ENCODE measurements at regions of chr11 and their contacts with region 1.

Region 1: GRCh38 chr11:6757373-6757967 is 14.3 kb downstream of the OR2AG2 start:
- DNase-seq: peak; percentile 65
- H3K4me3 Mint-ChIP-seq: no peak overlapping the region
- H3K27ac Mint-ChIP-seq: no peak overlapping the region
- H3K4me1 Mint-ChIP-seq: no peaks in the 10 kb centered on the region
- H3K27me3 Mint-ChIP-seq: peaks cover 4% of the 10 kb centered on the region

Region 2: DNA sequence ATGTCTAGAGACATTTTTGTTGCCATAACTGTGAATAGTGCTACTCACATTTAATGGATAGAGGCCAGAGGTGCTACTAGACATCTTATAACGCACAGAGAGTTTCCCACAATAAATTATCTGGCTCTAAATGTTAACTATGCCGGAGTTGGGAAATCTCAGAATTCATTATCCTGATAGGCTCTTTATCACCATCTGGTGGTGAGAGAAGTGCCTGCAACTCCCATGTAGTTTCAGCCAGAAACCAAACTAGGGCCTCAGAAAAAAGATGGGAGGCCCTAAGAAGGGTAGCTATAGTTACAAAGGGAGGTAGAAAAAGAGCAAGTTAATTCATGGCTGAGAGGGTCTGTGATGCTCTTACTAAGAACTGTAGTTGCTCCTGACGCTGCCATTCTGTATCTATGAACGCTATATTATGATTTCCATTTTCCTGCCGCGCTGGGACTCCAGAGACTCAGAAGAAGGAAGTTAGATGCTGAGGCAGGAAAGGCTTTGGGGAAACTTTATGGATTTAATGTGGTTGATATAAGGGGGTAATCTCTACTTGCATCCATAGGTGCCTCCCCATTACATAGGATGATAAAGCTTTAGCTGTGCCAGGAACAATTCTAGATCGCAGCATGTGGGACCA is 51.5 kb before region 1 on chr11:
- CTCF ChIA-PET with region 1: interaction called, 14 read pairs
- POLR2A ChIA-PET with region 1: no interaction called
- DNase-seq: peak; percentile 34
- H3K4me3 Mint-ChIP-seq: no peak overlapping the region
- H3K27ac Mint-ChIP-seq: no peak overlapping the region
- H3K4me1 Mint-ChIP-seq: peaks cover 7% of the 10 kb centered on the region
- H3K27me3 Mint-ChIP-seq: no peaks in the 10 kb centered on the region

Region 3: GRCh38 chr11:6721343-6721742 is 36.1 kb before region 1 on chr11:
- CTCF ChIA-PET with region 1: interaction called, 24 read pairs
- POLR2A ChIA-PET with region 1: no interaction called
- DNase-seq: no peak
- H3K4me3 Mint-ChIP-seq: no peak overlapping the region
- H3K27ac Mint-ChIP-seq: peak overlapping the region; percentile 33
- H3K4me1 Mint-ChIP-seq: peaks cover 57% of the 10 kb centered on the region
- H3K27me3 Mint-ChIP-seq: no peaks in the 10 kb centered on the region

Region 4: DNA sequence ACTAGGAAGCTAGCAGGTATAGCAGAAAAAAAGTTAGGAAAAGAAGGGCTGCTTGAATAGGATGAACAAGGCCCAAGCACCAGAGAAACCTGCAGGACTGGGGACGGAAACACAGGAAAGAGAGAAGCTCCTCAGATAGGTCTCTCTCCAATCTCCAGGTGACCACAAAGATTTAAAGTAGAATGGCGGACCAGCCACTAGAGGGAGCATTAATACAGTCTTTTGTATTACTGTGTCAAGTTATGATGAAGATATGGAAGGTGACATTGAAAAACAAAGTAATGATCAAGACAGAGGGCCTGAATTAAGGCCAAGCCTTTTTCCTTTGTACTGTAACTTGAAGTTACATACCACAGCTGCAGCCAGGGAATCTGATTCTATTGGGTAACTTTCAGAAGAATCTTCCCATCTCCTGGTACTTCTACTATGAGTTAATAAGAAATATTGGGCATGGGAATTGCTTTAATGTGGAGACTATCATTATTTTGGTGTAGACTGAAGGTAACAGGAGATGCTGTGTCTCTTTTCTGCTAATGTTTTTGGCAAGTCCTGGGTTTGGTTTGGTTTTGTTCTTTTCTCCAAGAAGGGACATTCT is 19.5 kb before region 1 on chr11:
- CTCF ChIA-PET with region 1: interaction called, 244 read pairs
- POLR2A ChIA-PET with region 1: interaction called, 5 read pairs
- DNase-seq: peak; percentile 71
- H3K4me3 Mint-ChIP-seq: no peak overlapping the region
- H3K27ac Mint-ChIP-seq: peak overlapping the region; percentile 29
- H3K4me1 Mint-ChIP-seq: peaks cover 86% of the 10 kb centered on the region
- H3K27me3 Mint-ChIP-seq: no peaks in the 10 kb centered on the region

Region 5: DNA sequence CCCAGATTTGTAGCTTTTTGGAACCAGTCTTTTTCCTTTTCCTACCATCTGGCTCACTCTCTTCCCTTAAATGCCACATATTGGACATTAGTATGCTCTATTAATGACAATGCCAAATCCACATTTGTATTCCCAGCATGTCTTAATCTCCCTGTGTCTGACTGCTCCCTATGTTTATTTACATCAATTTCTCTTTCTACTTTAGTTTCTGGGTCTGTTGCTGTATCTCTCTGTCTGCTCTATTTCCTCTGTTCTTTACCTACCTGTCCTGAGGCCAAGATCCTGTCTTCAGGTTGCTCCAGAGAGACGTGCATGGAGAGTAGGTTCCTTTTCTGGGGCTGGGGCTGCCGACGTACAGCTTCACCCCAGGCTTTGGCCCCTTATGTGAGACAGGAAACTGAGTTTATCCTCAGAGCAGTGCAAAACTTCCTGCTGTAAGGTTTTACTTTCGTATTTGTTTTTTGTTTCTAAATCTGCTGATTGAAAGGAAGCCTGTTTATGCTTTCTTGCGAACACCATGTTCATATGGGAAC is 11.3 kb before region 1 on chr11:
- CTCF ChIA-PET with region 1: interaction called, 244 read pairs
- POLR2A ChIA-PET with region 1: interaction called, 15 read pairs
- DNase-seq: peak; percentile 55
- H3K4me3 Mint-ChIP-seq: no peak overlapping the region
- H3K27ac Mint-ChIP-seq: no peak overlapping the region
- H3K4me1 Mint-ChIP-seq: peaks cover 26% of the 10 kb centered on the region
- H3K27me3 Mint-ChIP-seq: no peaks in the 10 kb centered on the region

Region 6: DNA sequence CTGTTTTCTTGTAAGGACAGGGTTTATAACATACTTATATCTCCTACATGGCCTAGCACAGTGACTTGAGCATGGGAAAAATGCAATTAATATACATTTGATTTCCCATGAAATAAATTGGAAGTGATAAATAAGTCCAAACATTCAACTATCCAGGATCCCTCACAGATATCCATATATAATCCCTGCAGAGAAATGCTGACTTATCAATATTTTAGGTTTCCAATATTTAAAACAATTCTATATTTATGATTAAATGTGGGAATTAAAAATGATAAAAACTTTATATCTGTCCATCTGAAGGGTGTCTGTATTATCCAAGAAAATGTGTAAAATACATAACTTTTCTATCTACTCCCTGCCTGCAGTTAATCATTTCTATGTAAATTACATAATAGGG is 125.3 kb after region 1 on chr11:
- CTCF ChIA-PET with region 1: no interaction called
- POLR2A ChIA-PET with region 1: no interaction called
- DNase-seq: no peak
- H3K4me3 Mint-ChIP-seq: no peak overlapping the region
- H3K27ac Mint-ChIP-seq: no peak overlapping the region
- H3K4me1 Mint-ChIP-seq: no peaks in the 10 kb centered on the region
- H3K27me3 Mint-ChIP-seq: peaks cover 27% of the 10 kb centered on the region

Measured in activated CD4-positive, alpha-beta memory T cell treated with anti-CD3 and anti-CD28 coated beads, Interleukin-2, amount 10 ng/mL, durations not matched to agents 7 days and 5 days (primary cell).